ENCODE measurements at regions of chr12 and their contacts with region 1.

Region 1: GRCh38 chr12:81585787-81586186 is 173.4 kb downstream of the PPFIA2 start:
- DNase-seq: no peak
- ATAC-seq: no peak
- H3K4me3 Mint-ChIP-seq: no peak overlapping the region
- H3K27ac Mint-ChIP-seq: no peak overlapping the region
- H3K4me1 Mint-ChIP-seq: no peaks in the 10 kb centered on the region
- H3K27me3 Mint-ChIP-seq: no peaks in the 10 kb centered on the region

Region 2: GRCh38 chr12:81597928-81598604 is 12.3 kb after region 1 on chr12:
- CTCF ChIA-PET with region 1: no interaction called
- POLR2A ChIA-PET with region 1: no interaction called
- intact Hi-C with region 1: loop called in 1 of 2 experiments (anchors 2 kb)
- DNase-seq: no peak
- ATAC-seq: no peak
- H3K4me3 Mint-ChIP-seq: no peak overlapping the region
- H3K27ac Mint-ChIP-seq: no peak overlapping the region
- H3K4me1 Mint-ChIP-seq: no peaks in the 10 kb centered on the region
- H3K27me3 Mint-ChIP-seq: peaks cover 2% of the 10 kb centered on the region

Region 3: DNA sequence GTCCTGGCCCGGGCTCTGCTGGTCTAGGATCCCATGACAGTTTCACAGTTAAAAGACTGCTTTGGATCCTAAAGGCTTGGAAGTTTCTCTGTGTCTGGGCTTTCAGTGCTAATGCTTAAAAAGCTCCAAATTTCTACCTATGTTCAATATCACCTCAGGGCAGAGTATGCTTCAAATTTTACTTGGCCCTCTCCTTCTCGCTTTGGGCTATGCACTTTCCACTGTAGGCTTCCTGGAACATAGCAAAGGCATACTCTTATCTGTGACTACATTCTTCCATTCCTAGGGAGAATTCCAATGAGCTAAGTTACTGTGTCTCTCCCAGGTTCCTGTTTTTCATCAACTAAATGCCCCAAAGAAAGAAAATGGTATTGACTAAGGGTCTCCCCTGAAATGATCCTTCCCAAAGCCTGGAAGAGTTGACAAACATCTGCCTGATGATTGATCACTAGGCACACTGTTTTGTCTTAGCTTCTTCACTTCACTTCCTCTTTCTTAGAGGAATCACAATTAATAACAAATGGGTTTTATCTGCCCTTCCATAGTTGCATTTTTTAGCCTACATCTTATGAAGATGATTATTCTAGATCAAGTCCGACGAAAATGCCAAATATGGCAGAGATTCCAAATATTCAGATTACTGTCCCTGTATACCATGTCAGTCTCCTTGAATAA is 1180.4 kb after region 1 on chr12:
- CTCF ChIA-PET with region 1: no interaction called
- POLR2A ChIA-PET with region 1: no interaction called
- intact Hi-C with region 1: no loop called
- DNase-seq: no peak
- ATAC-seq: no peak
- H3K4me3 Mint-ChIP-seq: no peak overlapping the region
- H3K27ac Mint-ChIP-seq: no peak overlapping the region
- H3K4me1 Mint-ChIP-seq: no peaks in the 10 kb centered on the region
- H3K27me3 Mint-ChIP-seq: no peaks in the 10 kb centered on the region

Measured in activated CD4-positive, alpha-beta T cell treated with anti-CD3 and anti-CD28 coated beads for 36 hours (primary cell).